ENCODE measurements at regions of chr10 and their contacts with region 1.

Region 1: DNA sequence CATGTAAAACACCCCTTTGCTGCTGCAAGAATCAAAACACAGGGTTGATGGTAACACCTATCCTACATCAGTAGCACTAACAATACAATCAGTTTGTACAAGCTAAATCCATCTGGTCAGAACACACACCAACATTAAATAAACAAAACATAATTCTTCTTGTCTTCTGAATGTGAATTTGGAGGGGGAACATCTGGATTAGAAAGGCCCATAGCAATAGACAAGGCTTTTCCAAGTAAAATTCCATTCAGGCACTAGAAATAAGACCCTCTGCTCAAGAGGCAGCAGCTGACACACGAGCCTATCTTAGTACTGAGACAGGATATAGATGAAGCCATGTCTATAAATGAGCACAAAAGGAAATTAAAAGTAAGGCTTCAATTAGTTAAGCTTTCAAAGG is 839.9 kb upstream of the LRRTM3 start:
- DNase-seq: no peak
- H3K4me3 ChIP-seq: no peak overlapping the region
- H3K27ac ChIP-seq: no peak overlapping the region
- H3K4me1 ChIP-seq: no peaks in the 10 kb centered on the region
- H3K27me3 ChIP-seq: no peaks in the 10 kb centered on the region
- CTCF ChIP-seq: no peak
- POLR2A ChIP-seq: no peak

Region 2: DNA sequence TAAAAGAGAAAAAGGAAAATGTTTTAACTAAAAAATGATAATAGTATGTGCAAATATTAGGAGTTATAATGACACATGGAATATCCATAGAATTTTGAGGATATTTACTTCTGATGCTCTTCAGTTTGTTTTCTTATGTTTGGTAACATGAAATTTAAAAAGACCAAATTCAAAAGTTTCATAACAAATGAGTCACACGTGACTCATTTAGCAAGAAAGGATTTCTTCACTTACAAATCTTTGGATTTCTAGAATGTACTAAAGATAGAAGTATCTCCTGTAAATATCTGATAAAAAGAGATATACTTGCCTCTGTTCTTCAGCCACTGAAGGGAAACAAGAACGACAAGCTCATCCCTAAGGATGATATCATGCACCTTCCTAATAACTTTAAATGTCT is 65.4 kb after region 1 on chr10:
- intact Hi-C with region 1: loop called (anchors 2 kb)
- DNase-seq: no peak
- H3K4me3 ChIP-seq: no peak overlapping the region
- H3K27ac ChIP-seq: no peak overlapping the region
- H3K4me1 ChIP-seq: no peaks in the 10 kb centered on the region
- H3K27me3 ChIP-seq: no peaks in the 10 kb centered on the region
- CTCF ChIP-seq: no peak
- POLR2A ChIP-seq: no peak